ENCODE measurements at regions of chr7 and their contacts with region 1.

Region 1: DNA sequence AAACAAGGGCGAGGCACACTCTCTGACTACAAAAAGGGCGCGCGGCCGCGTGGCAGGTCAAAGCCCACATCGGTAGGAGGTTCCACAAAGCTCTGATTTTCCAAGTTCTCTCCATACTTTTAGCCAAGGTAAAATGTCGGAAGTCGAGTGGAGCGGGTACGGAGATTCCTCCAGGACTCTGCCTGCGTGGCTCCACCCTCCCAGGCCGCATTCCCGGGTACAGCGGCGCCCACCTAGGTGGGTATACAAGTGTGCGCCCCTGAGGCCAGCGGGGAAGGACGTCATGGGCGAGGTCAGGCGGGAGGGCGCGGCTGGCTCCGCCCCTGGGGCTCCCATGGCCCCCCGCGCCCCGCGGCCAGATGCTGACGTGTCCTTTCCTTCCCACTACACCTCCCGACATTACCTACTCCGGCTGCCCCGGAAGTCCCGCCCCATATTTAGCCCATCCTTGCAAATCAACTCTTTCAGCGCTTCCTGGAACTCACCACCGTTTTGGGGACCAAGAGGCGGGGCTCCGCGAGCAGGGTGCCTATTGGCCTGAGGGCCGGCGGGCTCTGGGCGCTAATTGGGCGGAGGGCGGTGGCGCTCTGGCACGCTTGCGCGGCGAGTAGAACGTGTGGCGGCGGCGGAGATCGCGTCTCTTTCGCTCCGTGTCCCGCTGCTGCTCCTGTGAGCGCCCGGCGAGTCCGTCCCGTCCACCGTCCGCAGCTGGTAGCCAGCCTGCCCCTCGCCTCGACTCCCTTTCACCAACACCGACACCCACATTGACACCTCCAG is at the start of gene SND1:
- DNase-seq: peak; percentile 98 to 100 (median 99)
- H3K4me3 ChIP-seq: peak within 1 kb of the TSS; percentile 81
- H3K27ac ChIP-seq: peak within 1 kb of the TSS; percentile 87 to 95
- H3K4me1 ChIP-seq: peaks cover 11% of the 10 kb centered on the region
- H3K27me3 ChIP-seq: no peaks in the 10 kb centered on the region
- CTCF ChIP-seq: no peak
- EP300 ChIP-seq: peak; percentile 81
- POLR2A ChIP-seq: peak; percentile 81
- total RNA-seq, gene SND1: 93.6 to 271 (median 182) TPM

Region 2: DNA sequence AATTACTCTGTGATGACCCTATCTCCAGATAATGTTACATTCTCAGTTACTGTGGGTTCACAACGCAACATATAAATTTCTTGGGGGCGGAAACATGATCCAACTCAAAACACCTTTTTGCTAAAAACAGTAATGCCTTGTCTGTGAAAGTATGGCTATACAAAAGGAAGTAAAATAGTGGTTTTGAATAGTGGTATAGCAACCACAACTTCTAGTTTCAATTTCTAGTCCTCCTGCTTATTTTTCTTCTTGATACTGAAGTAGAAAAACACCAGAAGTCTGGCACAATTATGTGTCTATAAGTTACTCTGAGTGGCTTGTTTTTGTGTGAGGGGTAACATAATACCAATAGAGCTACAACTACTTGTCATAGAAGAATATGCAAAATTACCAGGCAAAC is 237.8 kb before region 1 on chr7:
- intact Hi-C with region 1: no loop called
- DNase-seq: no peak
- H3K4me3 ChIP-seq: no peak overlapping the region
- H3K27ac ChIP-seq: no peak overlapping the region
- H3K4me1 ChIP-seq: no peaks in the 10 kb centered on the region
- H3K27me3 ChIP-seq: no peaks in the 10 kb centered on the region
- CTCF ChIP-seq: no peak
- EP300 ChIP-seq: no peak
- POLR2A ChIP-seq: no peak

Region 3: DNA sequence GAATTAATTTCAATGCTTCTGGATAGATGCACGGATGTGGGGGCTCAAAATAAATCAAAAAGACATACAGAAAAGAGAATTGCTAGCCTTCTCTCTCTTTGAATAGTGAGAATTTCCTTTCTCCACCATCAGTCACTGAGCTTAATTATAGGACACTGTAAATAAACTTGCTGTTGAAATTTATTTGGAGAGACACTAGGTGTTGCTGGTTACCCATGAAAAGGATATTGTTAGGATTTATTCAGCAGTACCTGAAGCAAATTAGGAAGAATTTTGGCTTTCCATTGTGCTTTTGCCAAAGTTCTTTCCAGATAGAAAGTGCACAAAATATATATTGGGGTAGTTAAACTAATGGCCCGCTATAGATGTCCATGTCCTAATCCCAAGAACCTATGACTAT is 93.9 kb before region 1 on chr7:
- intact Hi-C with region 1: no loop called
- DNase-seq: no peak
- H3K4me3 ChIP-seq: no peak overlapping the region
- H3K27ac ChIP-seq: no peak overlapping the region
- H3K4me1 ChIP-seq: no peaks in the 10 kb centered on the region
- H3K27me3 ChIP-seq: no peaks in the 10 kb centered on the region
- CTCF ChIP-seq: no peak
- EP300 ChIP-seq: no peak
- POLR2A ChIP-seq: no peak

Region 4: GRCh38 chr7:127571741-127572505 is 79.8 kb before region 1 on chr7:
- intact Hi-C with region 1: no loop called
- DNase-seq: no peak
- H3K4me3 ChIP-seq: no peak overlapping the region
- H3K27ac ChIP-seq: no peak overlapping the region
- H3K4me1 ChIP-seq: no peaks in the 10 kb centered on the region
- H3K27me3 ChIP-seq: no peaks in the 10 kb centered on the region
- CTCF ChIP-seq: no peak
- EP300 ChIP-seq: no peak
- POLR2A ChIP-seq: no peak

Region 5: GRCh38 chr7:127585044-127585953 is 66.4 kb before region 1 on chr7 and contains the start of gene GCC1:
- intact Hi-C with region 1: loop called in 3 of 4 experiments (anchors 5 to 10 kb)
- DNase-seq: peak; percentile 92 to 99 (median 96)
- H3K4me3 ChIP-seq: peak within 1 kb of the TSS; percentile 60
- H3K27ac ChIP-seq: peak within 1 kb of the TSS; percentile 62 to 86
- H3K4me1 ChIP-seq: peaks cover 16% of the 10 kb centered on the region
- H3K27me3 ChIP-seq: no peaks in the 10 kb centered on the region
- CTCF ChIP-seq: no peak
- EP300 ChIP-seq: no peak
- POLR2A ChIP-seq: peak; percentile 88
- total RNA-seq, gene GCC1: 12.1 to 21.1 (median 16.0) TPM

Measured in ovary (tissue), 10 donors.